Right ventricle myocardium inferior (tissue), 1 donor: ENCODE measurements at regions of chr7 and their contacts with region 1.

Region 1: DNA sequence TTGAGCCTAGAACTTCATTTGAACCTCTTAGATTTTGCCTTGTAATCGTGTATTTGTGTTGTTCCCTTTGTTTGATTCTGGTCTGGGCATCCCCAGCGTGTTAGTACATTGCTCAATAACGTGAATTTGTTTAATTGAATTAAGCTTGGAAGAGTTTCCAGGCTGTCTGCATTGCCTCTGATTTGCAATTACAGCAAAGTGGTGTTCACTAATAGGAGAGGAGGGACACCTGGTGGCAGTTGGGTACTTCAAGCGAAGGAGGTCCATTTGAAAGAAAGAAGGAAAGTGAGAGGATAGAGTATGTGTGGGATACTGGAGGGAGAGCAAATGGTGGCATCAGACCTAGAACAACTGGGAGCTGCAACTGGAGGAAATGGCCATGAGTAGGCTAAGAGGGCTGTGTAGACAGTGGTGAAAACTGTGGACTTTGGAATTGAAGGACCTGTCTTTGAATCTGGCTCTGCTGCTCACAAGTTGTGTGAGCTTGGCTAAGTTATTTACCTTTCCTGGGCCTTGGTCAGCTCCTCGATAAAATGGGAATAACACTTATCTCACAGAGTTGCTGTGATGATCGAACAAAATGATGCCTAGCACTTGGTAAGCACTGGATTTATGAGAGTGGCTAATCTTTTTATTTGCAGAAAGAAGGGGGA is 15.1 kb downstream of the LSMEM1 start:
- DNase-seq: no peak
- ATAC-seq: peak; percentile 88

Region 2: GRCh38 chr7:111752022-111752582 is 743.8 kb before region 1 on chr7:
- intact Hi-C with region 1: loop called (anchors 5 kb)
- DNase-seq: peak; percentile 79
- ATAC-seq: no peak